H1 (cell line): ENCODE measurements at regions of chr1 and their contacts with region 1.

Region 1: GRCh38 chr1:204363335-204364124 is 3.8 kb upstream of the PLEKHA6 start:
- DNase-seq: peak in 1 of 2 experiments; percentile 91
- H3K4me3 ChIP-seq: peak overlapping the region in 3 of 4 experiments; percentile 30 to 50 (median 45); a peak in 6 of 8 replicates
- H3K27ac ChIP-seq: no peak overlapping the region
- H3K4me1 ChIP-seq: peaks cover 8 to 9% (median 9%) of the 10 kb centered on the region in 4 experiments
- H3K27me3 ChIP-seq: peaks cover 0 to 9% (median 5%) of the 10 kb centered on the region in 4 experiments; a peak in 4 of 7 replicates
- CTCF ChIP-seq: peak; percentile 84 to 98 (median 93)
- EP300 ChIP-seq: no peak
- POLR2A ChIP-seq: no peak
- RAD21 ChIP-seq: peak; percentile 96 to 99

Region 2: DNA sequence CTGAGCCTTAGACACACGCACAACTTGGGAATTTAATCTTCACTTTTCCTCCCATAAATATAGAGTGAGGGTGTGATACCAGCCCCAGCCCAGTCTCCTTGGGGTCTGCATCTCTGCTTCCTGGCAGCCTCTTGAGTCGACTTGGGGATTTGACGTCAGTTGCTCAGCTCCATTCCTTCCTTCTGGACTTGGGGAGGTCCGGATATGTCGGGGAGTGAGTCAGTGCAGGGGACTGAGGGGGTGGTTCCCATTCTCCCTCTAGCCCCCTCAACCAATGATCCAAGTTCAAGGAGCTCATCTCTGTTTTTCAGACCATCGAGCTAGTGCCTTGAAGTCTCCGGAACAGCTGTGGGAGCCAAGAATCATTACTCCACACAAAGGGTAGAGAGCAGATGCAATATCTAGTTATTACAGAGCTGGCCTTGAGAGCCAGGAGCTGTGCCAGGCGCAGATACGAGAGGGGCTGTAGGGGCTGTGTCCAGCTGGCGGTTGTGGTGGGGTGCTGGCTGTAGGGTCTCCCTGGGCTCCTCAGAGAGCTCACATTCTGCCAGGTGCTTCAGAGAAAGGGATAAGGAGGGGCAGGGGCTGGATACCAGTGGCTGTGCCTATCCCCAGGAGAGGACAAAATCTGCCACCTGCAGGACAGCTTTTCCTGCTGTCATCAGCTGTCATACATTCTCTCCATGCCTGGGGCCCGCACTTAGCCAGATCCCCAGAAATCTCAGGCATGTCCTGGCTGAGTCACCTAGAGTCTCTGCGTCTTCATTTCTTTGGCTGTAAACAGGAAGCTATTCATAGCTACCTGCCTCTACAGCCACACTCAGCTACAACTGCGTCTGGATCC is 165.2 kb before region 1 on chr1:
- CTCF ChIA-PET with region 1: interaction called, 61 read pairs
- POLR2A ChIA-PET with region 1: no interaction called
- DNase-seq: peak in 1 of 2 experiments; percentile 29
- H3K4me3 ChIP-seq: no peak overlapping the region
- H3K27ac ChIP-seq: no peak overlapping the region
- H3K4me1 ChIP-seq: peaks cover 0 to 5% (median 0%) of the 10 kb centered on the region in 4 experiments; a peak in 3 of 7 replicates
- H3K27me3 ChIP-seq: no peaks in the 10 kb centered on the region
- CTCF ChIP-seq: peak in 1 of 3 experiments; percentile 4; a peak in 2 of 4 replicates
- EP300 ChIP-seq: no peak
- POLR2A ChIP-seq: no peak
- RAD21 ChIP-seq: peak; percentile 16 to 29; a peak in 2 of 4 replicates

Region 3: GRCh38 chr1:204241050-204241449 is 122.5 kb before region 1 on chr1:
- CTCF ChIA-PET with region 1: interaction called, 43 read pairs
- POLR2A ChIA-PET with region 1: no interaction called
- DNase-seq: no peak
- H3K4me3 ChIP-seq: no peak overlapping the region
- H3K27ac ChIP-seq: no peak overlapping the region
- H3K4me1 ChIP-seq: no peaks in the 10 kb centered on the region
- H3K27me3 ChIP-seq: no peaks in the 10 kb centered on the region
- CTCF ChIP-seq: no peak; a peak in 1 of 4 replicates
- EP300 ChIP-seq: no peak
- POLR2A ChIP-seq: no peak
- RAD21 ChIP-seq: 0 out of 4 replicates have a peak, but pooled peaks of 1 of the 2 experiments have one; percentile 6

Region 4: DNA sequence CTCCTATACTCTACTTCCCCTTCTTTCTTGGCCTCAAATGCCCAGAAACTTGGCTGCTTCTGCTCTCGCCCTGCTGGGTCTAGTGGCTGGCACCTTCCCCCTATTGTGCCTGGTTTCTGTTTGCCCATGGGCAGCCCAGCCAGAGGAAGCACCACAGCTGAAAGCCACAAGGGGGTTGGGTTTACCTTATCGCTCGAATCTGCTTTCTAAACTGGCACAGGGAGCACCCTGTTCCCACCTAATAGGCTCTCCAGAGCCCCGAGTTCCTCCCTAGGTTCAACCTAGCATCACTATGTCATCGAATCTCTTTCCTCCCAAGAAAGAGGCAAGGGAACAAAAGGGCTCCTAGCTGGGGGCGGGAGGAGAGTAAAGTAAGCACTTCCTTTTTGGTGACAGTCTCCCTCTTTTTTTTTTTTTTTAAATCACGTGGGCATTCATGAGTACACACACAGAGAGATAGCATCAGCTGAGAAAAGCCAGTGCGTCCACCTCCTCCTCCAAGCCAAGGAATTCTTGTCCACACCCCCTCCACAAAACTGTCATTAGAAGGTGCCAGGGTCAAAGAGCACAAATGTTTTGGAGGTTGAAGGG is 76.6 kb before region 1 on chr1:
- CTCF ChIA-PET with region 1: interaction called, 203 read pairs
- POLR2A ChIA-PET with region 1: no interaction called
- DNase-seq: no peak
- H3K4me3 ChIP-seq: 0 out of 8 replicates have a peak overlapping the region, but pooled peaks of 1 of the 4 experiments have one; percentile 42
- H3K27ac ChIP-seq: no peak overlapping the region
- H3K4me1 ChIP-seq: peaks cover 8 to 22% (median 16%) of the 10 kb centered on the region in 4 experiments
- H3K27me3 ChIP-seq: no peaks in the 10 kb centered on the region
- CTCF ChIP-seq: no peak
- EP300 ChIP-seq: no peak
- POLR2A ChIP-seq: no peak
- RAD21 ChIP-seq: no peak

Region 5: DNA sequence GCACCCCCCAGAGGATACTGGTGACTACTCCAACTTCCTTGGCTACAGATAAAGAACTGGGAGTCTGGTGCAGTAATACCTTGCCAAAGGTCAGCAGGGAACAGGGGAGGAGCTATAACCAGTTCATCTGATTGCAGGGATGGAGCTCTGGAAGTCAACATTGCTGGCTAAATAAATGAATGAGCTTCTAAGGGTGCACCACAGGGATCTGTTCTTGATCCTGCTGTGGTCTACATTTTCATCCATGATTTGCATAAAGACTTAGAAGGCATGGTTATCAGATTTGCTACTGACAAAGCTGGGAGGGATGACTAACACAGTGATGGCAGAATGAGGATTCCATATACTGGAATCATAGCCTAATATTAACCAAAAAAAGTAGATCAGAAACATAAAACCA is 22.1 kb before region 1 on chr1:
- CTCF ChIA-PET with region 1: interaction called, 110 read pairs
- POLR2A ChIA-PET with region 1: interaction called, 5 read pairs
- DNase-seq: no peak
- H3K4me3 ChIP-seq: no peak overlapping the region
- H3K27ac ChIP-seq: no peak overlapping the region
- H3K4me1 ChIP-seq: peaks cover 17 to 36% (median 32%) of the 10 kb centered on the region in 4 experiments
- H3K27me3 ChIP-seq: peaks cover 0 to 2% (median 0%) of the 10 kb centered on the region in 4 experiments; a peak in 3 of 7 replicates
- CTCF ChIP-seq: no peak
- EP300 ChIP-seq: no peak
- POLR2A ChIP-seq: no peak
- RAD21 ChIP-seq: no peak

Region 6: GRCh38 chr1:204417231-204417997 is 53.9 kb after region 1 on chr1:
- CTCF ChIA-PET with region 1: no interaction called
- POLR2A ChIA-PET with region 1: no interaction called
- DNase-seq: peak in 1 of 2 experiments; percentile 47
- H3K4me3 ChIP-seq: no peak overlapping the region
- H3K27ac ChIP-seq: no peak overlapping the region
- H3K4me1 ChIP-seq: peaks cover 2 to 13% (median 8%) of the 10 kb centered on the region in 4 experiments; a peak in 5 of 7 replicates
- H3K27me3 ChIP-seq: no peaks in the 10 kb centered on the region
- CTCF ChIP-seq: no peak
- EP300 ChIP-seq: no peak
- POLR2A ChIP-seq: no peak
- RAD21 ChIP-seq: no peak